ENCODE measurements at regions of chr19 and their contacts with region 1.

Region 1: DNA sequence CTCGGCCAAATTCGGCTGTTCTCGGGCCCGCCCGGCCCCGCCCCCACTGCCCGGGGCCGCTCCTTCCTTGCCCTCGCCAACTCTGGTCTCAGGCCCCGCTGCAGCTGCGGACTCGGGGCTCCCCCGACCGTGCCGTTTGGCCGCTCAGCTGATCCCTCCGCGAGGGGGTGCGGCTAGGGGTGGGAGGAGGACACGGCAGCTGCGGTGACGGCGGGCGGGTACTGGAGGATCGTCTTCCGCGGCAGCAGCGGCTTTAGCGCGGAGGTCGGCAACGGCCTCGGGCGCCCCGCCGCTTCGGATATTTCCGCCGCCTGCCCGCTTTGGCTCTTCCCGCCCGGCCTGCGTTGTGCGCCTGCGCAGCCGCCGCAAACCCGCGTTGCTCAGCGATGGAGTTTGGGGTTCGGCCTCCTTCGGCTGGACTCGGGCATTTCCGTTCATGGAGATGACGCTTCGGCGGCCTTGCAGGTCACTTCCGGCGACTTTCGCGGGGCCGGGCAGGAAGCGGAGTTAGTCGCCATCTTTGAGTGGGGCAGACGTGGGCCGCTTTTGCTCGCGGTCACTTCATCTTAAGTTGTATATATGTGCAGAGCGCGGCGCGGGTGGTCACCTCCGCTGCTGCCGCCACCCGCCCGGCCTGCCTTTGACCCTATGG is 338 bp upstream of the UBE2M start:
- DNase-seq: peak; percentile 99
- H3K4me3 ChIP-seq: peak overlapping the region; percentile 69
- H3K4me3 Mint-ChIP-seq: peak overlapping the region; percentile 99
- H3K27ac Mint-ChIP-seq: peak overlapping the region; percentile 98
- H3K4me1 ChIP-seq: peaks cover 15% of the 10 kb centered on the region; the same call in 1 of the 2 replicates
- H3K4me1 Mint-ChIP-seq: peaks cover 31% of the 10 kb centered on the region
- H3K27me3 ChIP-seq: no peaks in the 10 kb centered on the region
- H3K27me3 Mint-ChIP-seq: no peaks in the 10 kb centered on the region
- CTCF ChIP-seq: no peak

Region 2: GRCh38 chr19:58572818-58573657 is 14.3 kb after region 1 on chr19 and contains the start of gene MZF1:
- CTCF ChIA-PET with region 1: interaction called, 3 read pairs
- POLR2A ChIA-PET with region 1: interaction called, 16 read pairs
- intact Hi-C with region 1: loop called (anchors 1 kb)
- DNase-seq: peak; percentile 99 to 100
- H3K4me3 ChIP-seq: peak within 1 kb of the TSS; percentile 67
- H3K4me3 Mint-ChIP-seq: peak within 1 kb of the TSS; percentile 87
- H3K27ac Mint-ChIP-seq: peak within 1 kb of the TSS; percentile 98
- H3K4me1 ChIP-seq: no peaks in the 10 kb centered on the region
- H3K4me1 Mint-ChIP-seq: peaks cover 17% of the 10 kb centered on the region
- H3K27me3 ChIP-seq: no peaks in the 10 kb centered on the region
- H3K27me3 Mint-ChIP-seq: no peaks in the 10 kb centered on the region
- CTCF ChIP-seq: peak in 1 of 2 experiments; percentile 6
- total RNA-seq, gene MZF1: 20.4 and 25.6 TPM in 2 replicates

Region 3: DNA sequence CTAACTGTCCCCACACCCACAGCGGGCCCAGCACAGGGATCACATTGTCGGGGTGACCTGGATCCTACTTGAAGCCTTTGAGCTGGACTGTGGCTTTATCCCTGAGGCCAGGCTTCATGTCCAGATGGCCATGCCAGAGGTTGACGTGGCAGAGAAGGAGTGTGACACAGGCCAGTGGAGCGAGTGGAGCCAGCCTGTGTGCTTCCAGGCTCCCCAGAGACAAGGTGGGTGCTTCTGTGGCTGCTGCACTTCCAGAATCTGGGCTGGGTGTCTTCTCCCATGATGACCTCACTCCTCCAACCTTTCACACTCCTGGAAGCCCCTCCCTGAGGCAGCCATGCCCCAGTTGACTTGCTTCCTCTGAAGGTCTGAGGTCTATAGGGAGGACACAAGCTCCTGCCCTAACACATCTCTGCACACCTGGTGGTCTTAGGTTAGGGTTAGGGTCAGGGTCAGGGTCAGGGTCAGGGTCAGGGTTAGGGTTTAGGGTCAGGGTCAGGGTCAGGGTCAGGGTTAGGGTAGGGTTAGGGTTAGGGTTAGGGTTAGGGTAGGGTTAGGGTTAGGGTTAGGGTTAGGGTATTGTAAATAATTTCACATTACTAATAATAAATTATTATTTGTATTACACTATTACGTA is 27.5 kb after region 1 on chr19:
- CTCF ChIA-PET with region 1: no interaction called
- POLR2A ChIA-PET with region 1: no interaction called
- intact Hi-C with region 1: no loop called
- DNase-seq: no peak
- H3K4me3 ChIP-seq: no peak overlapping the region
- H3K4me3 Mint-ChIP-seq: no peak overlapping the region
- H3K27ac Mint-ChIP-seq: no peak overlapping the region
- H3K4me1 ChIP-seq: no peaks in the 10 kb centered on the region
- H3K4me1 Mint-ChIP-seq: no peaks in the 10 kb centered on the region
- H3K27me3 ChIP-seq: no peaks in the 10 kb centered on the region
- H3K27me3 Mint-ChIP-seq: no peaks in the 10 kb centered on the region
- CTCF ChIP-seq: no peak